ENCODE measurements at regions of chrX and their contacts with region 1.

Region 1: DNA sequence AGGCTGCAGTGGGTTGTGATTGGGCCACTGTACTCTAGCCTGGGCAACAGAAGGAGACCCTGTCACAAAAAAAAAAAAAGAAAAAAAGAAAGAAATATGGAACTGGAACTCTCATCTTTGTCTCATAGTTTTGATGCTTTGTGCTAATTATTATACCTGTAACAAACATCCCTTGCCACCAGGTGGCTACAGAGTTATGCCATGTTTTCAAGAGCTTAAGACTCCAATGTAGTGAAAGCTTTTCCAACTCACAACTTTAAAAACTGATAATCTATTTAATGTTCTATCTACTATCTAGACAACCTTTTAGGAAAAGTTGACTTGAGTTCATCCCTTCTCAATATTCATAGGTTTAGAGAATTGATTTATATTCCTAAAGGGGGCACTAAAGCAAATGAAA is 42.4 kb downstream of the HTR2C start:
- DNase-seq: no peak
- H3K4me3 ChIP-seq: no peak overlapping the region
- H3K27me3 ChIP-seq: no peaks in the 10 kb centered on the region
- CTCF ChIP-seq: peak; percentile 34; the same call in 1 of the 2 replicates

Region 2: DNA sequence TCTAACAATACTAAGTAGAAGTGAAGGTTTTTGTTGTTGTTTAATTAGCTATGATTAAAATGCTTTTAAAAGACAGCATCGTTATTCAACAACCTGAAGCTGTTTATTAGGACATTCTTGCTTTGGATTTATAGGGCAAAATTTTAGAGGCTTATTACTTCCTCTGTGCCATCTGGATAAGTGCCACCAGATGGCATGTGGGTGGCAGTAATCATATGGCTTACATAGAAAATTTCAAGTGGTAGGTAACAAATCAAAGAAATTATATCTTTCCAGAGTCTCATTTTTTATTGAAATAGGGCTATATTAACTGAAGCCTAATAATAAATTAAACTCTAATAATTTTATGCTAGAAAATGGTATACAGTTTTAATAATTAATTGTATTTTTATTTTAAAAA is 125.7 kb before region 1 on chrX:
- CTCF ChIA-PET with region 1: no interaction called
- POLR2A ChIA-PET with region 1: no interaction called
- DNase-seq: no peak
- H3K4me3 ChIP-seq: no peak overlapping the region
- H3K27me3 ChIP-seq: no peaks in the 10 kb centered on the region
- CTCF ChIP-seq: no peak

Region 3: GRCh38 chrX:114611018-114611619 is 15.2 kb before region 1 on chrX:
- CTCF ChIA-PET with region 1: interaction called, 10 read pairs
- POLR2A ChIA-PET with region 1: no interaction called
- DNase-seq: no peak
- H3K4me3 ChIP-seq: no peak overlapping the region
- H3K27me3 ChIP-seq: no peaks in the 10 kb centered on the region
- CTCF ChIP-seq: peak; percentile 60

Region 4: DNA sequence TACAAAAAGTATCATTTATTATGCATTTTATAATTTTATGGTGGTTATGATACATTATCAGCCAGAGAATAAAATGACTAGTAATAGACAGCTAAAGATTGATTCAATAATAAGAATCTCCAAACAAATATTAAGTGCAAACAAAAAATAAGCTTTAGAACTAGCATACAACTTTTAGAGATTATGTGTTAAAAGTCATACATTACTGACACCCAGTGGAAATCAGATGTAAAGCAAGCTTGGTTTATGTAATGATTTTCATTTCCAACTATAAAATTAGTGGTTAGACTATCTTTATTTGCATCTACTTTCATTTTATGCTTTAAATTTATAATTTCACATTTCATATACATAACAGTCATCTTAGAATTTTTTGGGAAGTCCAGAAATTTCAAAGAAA is 333.4 kb after region 1 on chrX:
- CTCF ChIA-PET with region 1: interaction called, 14 read pairs
- POLR2A ChIA-PET with region 1: no interaction called
- DNase-seq: no peak
- H3K4me3 ChIP-seq: no peak overlapping the region
- H3K27me3 ChIP-seq: no peaks in the 10 kb centered on the region
- CTCF ChIP-seq: peak; percentile 21; the same call in 1 of the 2 replicates